Cardiac septum (tissue), 1 donor: ENCODE measurements at regions of chr3 and their contacts with region 1.

Region 1: DNA sequence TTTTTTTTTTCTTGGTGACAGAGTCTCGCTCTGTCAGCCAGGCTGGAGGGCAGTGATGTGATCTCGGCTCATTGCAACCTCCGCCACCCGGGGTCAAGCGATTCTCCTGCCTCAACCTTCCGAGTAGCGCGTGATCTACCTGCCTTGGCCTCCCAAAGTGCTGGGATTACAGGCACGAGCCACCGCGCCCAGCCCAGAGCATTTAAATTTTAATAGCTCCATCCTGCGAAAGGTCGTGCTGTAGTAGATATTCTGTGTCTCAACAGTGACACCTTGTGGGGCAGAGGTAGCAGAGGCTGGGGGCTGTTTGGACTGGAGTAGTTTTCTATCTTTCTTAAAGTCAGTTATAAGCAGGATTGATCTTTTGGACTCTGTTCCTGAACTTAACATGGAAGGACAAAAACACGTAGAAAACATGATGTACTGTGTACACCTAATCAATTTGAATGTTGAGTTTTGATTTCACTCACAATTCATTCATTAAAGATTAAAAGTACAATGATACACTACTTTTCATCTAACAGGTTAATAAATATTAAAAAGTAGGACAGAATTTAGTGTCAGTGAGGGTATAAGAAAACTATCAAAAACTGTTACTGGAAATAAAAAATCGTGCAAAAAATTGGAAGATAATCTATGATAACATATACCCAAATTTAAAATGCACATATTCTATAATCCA is 11.0 kb upstream of the PDCD6IP start:
- DNase-seq: no peak

Region 2: DNA sequence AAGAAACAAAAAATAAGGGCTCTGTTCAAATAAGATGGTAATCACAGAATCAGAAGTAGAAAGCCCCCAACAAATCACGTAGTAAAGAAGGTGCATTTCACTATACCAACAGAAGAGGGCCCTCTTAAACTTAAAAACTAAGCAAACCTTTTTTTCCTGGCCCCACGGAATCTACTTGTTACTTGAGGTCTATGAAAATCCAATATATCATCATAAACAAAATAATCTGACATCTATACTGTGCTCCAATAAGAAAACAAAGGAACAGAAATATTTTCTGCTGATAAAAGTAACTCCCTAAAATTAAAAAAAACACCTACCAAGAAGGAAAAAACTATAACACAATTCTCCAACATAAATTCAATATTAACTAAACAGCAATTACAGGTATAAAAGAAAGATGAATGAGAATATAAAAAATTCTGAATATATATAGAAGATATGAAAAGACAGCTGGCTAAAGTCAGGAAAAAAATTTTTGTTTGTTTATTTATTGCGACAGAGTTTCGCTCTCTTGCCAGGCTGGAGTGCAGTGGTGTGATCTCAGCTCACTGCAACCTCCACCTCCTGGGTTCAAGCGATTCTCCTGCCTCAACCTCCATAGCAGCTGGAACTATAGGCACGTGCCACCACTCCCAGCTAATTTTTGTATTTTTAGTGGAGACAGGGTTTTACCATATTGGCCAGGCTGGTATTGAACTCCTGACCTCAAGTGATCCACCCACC is 151.2 kb before region 1 on chr3:
- intact Hi-C with region 1: loop called (anchors 2 kb)
- DNase-seq: no peak